GM12878 (cell line): ENCODE measurements at regions of chr15 and their contacts with region 1.

Region 1: GRCh38 chr15:74768771-74769342 is 13.0 kb upstream of the CSK start:
- DNase-seq: no peak
- ATAC-seq: peak; percentile 58
- H3K4me3 ChIP-seq: no peak overlapping the region
- H3K27ac ChIP-seq: no peak overlapping the region
- H3K4me1 ChIP-seq: peaks cover 12% of the 10 kb centered on the region
- H3K27me3 ChIP-seq: no peaks in the 10 kb centered on the region
- CTCF ChIP-seq: peak; percentile 76 to 84 (median 76)
- EP300 ChIP-seq: no peak
- POLR2A ChIP-seq: no peak
- RAD21 ChIP-seq: peak; percentile 91

Region 2: GRCh38 chr15:74396445-74397238 is 372.2 kb before region 1 on chr15:
- CTCF ChIA-PET with region 1: no interaction called
- POLR2A ChIA-PET with region 1: no interaction called
- RAD21 ChIA-PET with region 1: no interaction called
- SMC1A ChIA-PET with region 1: no interaction called
- in situ Hi-C with region 1: no loop called
- intact Hi-C with region 1: no loop called
- DNase-seq: peak; percentile 93
- ATAC-seq: peak; percentile 57
- H3K4me3 ChIP-seq: peak overlapping the region; percentile 54
- H3K27ac ChIP-seq: peak overlapping the region; percentile 100
- H3K4me1 ChIP-seq: peaks cover 94% of the 10 kb centered on the region
- H3K27me3 ChIP-seq: no peaks in the 10 kb centered on the region
- CTCF ChIP-seq: peak in 2 of 3 experiments; percentile 17 to 23; a peak in 2 of 6 replicates
- EP300 ChIP-seq: peak; percentile 95 to 96; a peak in 3 of 4 replicates
- POLR2A ChIP-seq: no peak
- RAD21 ChIP-seq: peak; percentile 27; the same call in 1 of the 2 replicates

Region 3: GRCh38 chr15:74635228-74635627 is 133.6 kb before region 1 on chr15:
- CTCF ChIA-PET with region 1: interaction called, 380 read pairs
- POLR2A ChIA-PET with region 1: interaction called, 4 read pairs
- RAD21 ChIA-PET with region 1: interaction called, 77 read pairs
- SMC1A ChIA-PET with region 1: interaction called, 116 read pairs
- in situ Hi-C with region 1: loop called (anchors 5 kb)
- intact Hi-C with region 1: loop called (anchors 1 kb)
- DNase-seq: no peak
- ATAC-seq: peak; percentile 91
- H3K4me3 ChIP-seq: no peak overlapping the region
- H3K27ac ChIP-seq: no peak overlapping the region
- H3K4me1 ChIP-seq: no peaks in the 10 kb centered on the region
- H3K27me3 ChIP-seq: no peaks in the 10 kb centered on the region
- CTCF ChIP-seq: peak; percentile 89 to 98 (median 95); a peak in 5 of 6 replicates
- EP300 ChIP-seq: no peak
- POLR2A ChIP-seq: 0 out of 2 replicates have a peak, but pooled peaks have one; percentile 12
- RAD21 ChIP-seq: peak; percentile 95

Region 4: GRCh38 chr15:74799856-74800547 is 31.1 kb after region 1 on chr15:
- CTCF ChIA-PET with region 1: interaction called, 1,288 read pairs
- POLR2A ChIA-PET with region 1: interaction called, 602 read pairs
- RAD21 ChIA-PET with region 1: interaction called, 1,186 read pairs
- SMC1A ChIA-PET with region 1: interaction called, 811 read pairs
- in situ Hi-C with region 1: no loop called
- intact Hi-C with region 1: loop called (anchors 1 kb)
- DNase-seq: peak; percentile 76
- ATAC-seq: peak; percentile 94
- H3K4me3 ChIP-seq: no peak overlapping the region
- H3K27ac ChIP-seq: peak overlapping the region; percentile 39
- H3K4me1 ChIP-seq: peaks cover 38% of the 10 kb centered on the region
- H3K27me3 ChIP-seq: no peaks in the 10 kb centered on the region
- CTCF ChIP-seq: peak; percentile 97 to 99 (median 99); a peak in 5 of 6 replicates
- EP300 ChIP-seq: 0 out of 4 replicates have a peak, but pooled peaks of 1 of the 2 experiments have one; percentile 60
- POLR2A ChIP-seq: peak; percentile 69
- RAD21 ChIP-seq: peak; percentile 93

Region 5: GRCh38 chr15:74821091-74821789 is 52.4 kb after region 1 on chr15:
- CTCF ChIA-PET with region 1: interaction called, 53 read pairs
- POLR2A ChIA-PET with region 1: no interaction called
- RAD21 ChIA-PET with region 1: interaction called, 7 read pairs
- SMC1A ChIA-PET with region 1: interaction called, 4 read pairs
- in situ Hi-C with region 1: no loop called
- intact Hi-C with region 1: no loop called
- DNase-seq: peak; percentile 45
- ATAC-seq: peak; percentile 87
- H3K4me3 ChIP-seq: no peak overlapping the region
- H3K27ac ChIP-seq: no peak overlapping the region
- H3K4me1 ChIP-seq: peaks cover 16% of the 10 kb centered on the region
- H3K27me3 ChIP-seq: peaks cover 0 to 5% of the 10 kb centered on the region in 2 experiments; a peak in 2 of 4 replicates
- CTCF ChIP-seq: no peak
- EP300 ChIP-seq: no peak
- POLR2A ChIP-seq: no peak
- RAD21 ChIP-seq: no peak

Region 6: DNA sequence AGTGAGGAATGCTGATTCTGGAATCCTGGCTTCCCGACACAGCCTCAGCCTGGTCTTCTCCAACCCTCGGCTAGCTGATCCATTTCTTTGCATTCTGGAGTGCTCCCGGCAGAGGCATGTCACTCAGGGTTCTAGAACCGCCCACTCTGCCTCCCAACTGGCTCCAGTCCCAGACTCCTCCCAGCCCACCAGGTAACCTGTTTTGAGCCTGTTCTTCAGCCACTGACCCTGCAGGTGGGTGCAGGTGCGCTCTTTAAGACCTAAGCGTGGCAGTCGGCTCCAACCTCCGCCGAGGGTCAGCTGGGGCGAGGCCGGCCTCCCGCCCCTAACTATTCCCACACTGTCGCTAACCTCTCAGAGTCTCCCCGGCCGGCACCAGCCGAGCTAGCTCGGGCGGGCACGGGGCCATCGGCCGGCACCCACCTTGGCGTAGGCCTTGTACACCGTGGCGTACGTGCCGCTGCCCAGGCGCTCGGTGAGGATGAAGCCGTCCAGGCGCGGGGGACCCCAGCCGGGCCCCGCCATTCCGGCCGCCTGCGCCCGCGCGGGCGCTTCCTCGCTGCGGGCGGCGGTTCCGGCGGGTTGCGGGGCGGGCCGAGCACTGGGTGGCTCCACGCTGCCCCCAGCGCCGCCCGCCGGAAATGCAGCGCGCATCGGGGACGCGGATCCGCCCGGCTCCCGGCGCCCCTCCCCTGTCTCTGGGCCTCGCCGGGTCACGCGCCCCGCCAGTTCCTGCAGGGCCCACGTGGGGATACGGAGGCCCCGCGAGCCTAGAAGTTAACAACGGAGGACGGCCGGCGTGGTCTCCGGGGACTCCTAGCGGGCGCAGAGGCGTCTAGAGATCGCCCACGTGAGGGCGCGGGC is 74.0 kb after region 1 on chr15 and contains the start of gene ULK3:
- CTCF ChIA-PET with region 1: interaction called, 30 read pairs
- POLR2A ChIA-PET with region 1: no interaction called
- RAD21 ChIA-PET with region 1: interaction called, 12 read pairs
- SMC1A ChIA-PET with region 1: interaction called, 7 read pairs
- in situ Hi-C with region 1: no loop called
- intact Hi-C with region 1: loop called (anchors 2 kb)
- DNase-seq: no peak
- ATAC-seq: peak; percentile 95
- H3K4me3 ChIP-seq: peak within 1 kb of the TSS; percentile 86
- H3K27ac ChIP-seq: peak within 1 kb of the TSS; percentile 80
- H3K4me1 ChIP-seq: peaks cover 13% of the 10 kb centered on the region
- H3K27me3 ChIP-seq: no peaks in the 10 kb centered on the region
- CTCF ChIP-seq: peak; percentile 45 to 60 (median 50); a peak in 5 of 6 replicates
- EP300 ChIP-seq: no peak
- POLR2A ChIP-seq: peak; percentile 75
- RAD21 ChIP-seq: peak; percentile 26
- polyA plus RNA-seq, gene ULK3: 0.64 to 1.4 TPM

Region 7: DNA sequence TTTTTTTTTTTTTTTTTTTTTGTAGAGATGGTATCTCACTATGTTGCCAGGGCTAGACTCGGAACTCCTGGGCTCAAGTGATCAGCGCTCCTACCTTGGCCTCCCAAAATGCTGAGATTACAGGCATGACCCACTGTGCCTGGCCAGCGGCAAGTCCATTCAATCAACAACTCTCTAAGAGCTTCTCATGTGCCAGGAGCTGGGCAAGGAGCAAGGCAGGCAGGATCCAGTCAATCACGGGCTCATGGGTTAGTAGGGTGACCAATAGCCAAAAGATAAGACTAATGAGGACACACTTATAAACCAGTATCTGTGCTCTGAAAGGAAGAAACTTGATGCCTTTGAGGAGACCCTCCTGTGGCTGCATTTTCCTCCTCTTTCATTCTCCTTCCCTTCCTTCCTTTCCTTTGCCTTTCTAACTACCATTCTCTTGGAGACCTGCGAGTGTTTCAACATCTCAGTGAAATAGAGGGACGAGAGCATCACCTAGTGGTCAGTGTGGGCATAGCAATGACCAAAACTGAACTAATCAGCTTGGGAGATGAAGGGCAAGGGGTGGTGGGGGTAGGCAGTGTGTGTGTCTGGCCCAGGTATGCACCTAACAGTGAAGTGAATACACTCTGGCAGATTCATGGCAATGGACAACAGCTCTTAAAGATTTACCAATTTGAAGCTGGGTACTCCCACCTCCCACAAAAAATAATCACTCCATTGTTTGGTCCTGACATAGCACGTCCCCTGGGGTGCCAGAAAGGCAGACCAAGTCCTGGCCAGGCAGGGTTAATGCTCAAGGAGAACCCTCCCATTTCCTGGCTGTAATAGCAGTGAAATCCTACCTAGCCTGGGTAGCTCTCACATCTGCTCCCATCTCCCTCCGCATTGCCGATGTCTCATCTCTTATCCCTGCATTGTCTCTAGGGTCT is 181.5 kb after region 1 on chr15:
- CTCF ChIA-PET with region 1: interaction called, 117 read pairs
- POLR2A ChIA-PET with region 1: interaction called, 4 read pairs
- RAD21 ChIA-PET with region 1: interaction called, 50 read pairs
- SMC1A ChIA-PET with region 1: interaction called, 82 read pairs
- in situ Hi-C with region 1: loop called (anchors 5 kb)
- intact Hi-C with region 1: loop called (anchors 1 kb)
- DNase-seq: peak; percentile 53
- ATAC-seq: peak; percentile 93
- H3K4me3 ChIP-seq: no peak overlapping the region
- H3K27ac ChIP-seq: no peak overlapping the region
- H3K4me1 ChIP-seq: no peaks in the 10 kb centered on the region; the same call in none of the 2 replicates
- H3K27me3 ChIP-seq: no peaks in the 10 kb centered on the region
- CTCF ChIP-seq: peak; percentile 99 to 100 (median 99); a peak in 5 of 6 replicates
- EP300 ChIP-seq: no peak
- POLR2A ChIP-seq: no peak
- RAD21 ChIP-seq: peak; percentile 99